ENCODE measurements at regions of chr1 and their contacts with region 1.

Region 1: DNA sequence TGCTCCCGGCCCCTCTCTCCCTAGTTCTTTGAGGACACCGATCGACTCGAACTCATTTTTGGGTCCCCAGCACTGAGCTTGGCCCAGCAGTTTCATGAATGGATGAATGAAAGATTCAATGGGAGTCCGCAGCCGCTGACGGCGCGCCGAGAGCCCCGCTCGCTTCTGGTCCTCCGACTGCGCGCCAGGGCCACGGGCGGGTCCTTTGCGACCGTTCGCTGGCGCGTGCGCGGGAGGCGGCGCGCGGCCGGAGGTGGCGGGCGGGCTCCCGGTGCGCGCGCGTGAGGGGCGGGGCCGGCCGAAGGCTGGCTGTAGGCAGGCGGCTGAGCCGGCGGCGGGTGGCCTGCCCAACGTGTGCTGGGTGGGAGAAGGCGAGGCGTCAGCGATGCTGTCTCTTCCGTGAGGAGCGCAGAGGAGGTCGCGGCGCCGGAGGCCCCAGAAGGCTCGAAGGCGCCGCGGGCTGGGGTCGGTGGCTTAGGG is at the start of gene MAST2:
- DNase-seq: peak; percentile 86
- H3K4me3 Mint-ChIP-seq: peak within 1 kb of the TSS; percentile 93
- H3K27ac Mint-ChIP-seq: peak within 1 kb of the TSS; percentile 72
- H3K4me1 Mint-ChIP-seq: peaks cover 31% of the 10 kb centered on the region
- H3K27me3 Mint-ChIP-seq: no peaks in the 10 kb centered on the region
- CTCF ChIP-seq: no peak
- total RNA-seq, gene MAST2: 33.3 and 39.2 TPM in 2 replicates

Region 2: GRCh38 chr1:45196873-45197272 is 606.5 kb before region 1 on chr1:
- CTCF ChIA-PET with region 1: no interaction called
- POLR2A ChIA-PET with region 1: no interaction called
- intact Hi-C with region 1: no loop called
- DNase-seq: no peak
- H3K4me3 Mint-ChIP-seq: no peak overlapping the region
- H3K27ac Mint-ChIP-seq: no peak overlapping the region
- H3K4me1 Mint-ChIP-seq: no peaks in the 10 kb centered on the region
- H3K27me3 Mint-ChIP-seq: peaks cover 10% of the 10 kb centered on the region
- CTCF ChIP-seq: no peak

Region 3: GRCh38 chr1:45750298-45751038 is 52.9 kb before region 1 on chr1 and contains the start of gene IPP:
- CTCF ChIA-PET with region 1: no interaction called
- POLR2A ChIA-PET with region 1: interaction called, 10 read pairs
- intact Hi-C with region 1: loop called (anchors 1 kb)
- DNase-seq: peak; percentile 97
- H3K4me3 Mint-ChIP-seq: peak within 1 kb of the TSS; percentile 97
- H3K27ac Mint-ChIP-seq: peak within 1 kb of the TSS; percentile 100
- H3K4me1 Mint-ChIP-seq: peaks cover 4% of the 10 kb centered on the region
- H3K27me3 Mint-ChIP-seq: no peaks in the 10 kb centered on the region
- CTCF ChIP-seq: no peak
- total RNA-seq, gene IPP: 11.6 and 17.6 TPM in 2 replicates

Region 4: DNA sequence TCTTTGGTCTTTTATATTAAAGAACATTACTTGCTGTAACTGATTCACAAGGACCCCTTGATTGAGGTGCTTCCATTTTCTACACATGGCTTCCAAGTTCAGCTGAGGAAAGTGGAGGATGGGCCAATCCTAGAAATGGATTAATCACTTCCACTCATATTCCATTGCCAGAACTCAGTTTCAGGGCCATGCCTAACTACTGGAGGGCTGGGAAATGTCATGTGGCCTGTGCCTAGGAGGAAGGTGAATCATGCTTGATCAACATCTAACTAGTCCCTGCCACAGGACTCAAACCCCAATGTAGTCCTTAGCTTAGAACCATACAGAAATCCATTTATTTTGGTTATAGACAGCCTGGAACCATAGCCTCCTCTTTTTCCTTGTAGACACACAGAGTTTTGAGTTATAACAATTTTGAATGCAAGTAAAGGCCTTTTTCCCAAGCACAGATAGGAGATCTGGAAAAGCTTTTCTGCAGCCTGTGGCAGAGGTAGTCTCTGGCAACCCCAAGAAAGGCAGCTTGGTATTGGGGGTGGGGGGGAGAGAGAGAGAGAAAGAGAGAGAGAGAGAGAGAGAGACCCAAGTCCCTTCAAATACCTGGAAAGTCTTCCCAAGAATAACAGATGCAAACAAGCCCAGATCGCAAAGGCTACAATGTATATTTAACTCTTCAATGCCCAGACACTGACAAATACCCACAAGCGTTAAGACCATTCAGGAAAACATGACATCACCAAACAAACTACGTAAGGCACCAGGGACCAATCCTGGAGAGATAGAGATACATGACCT is 12.5 kb after region 1 on chr1:
- CTCF ChIA-PET with region 1: interaction called, 7 read pairs
- POLR2A ChIA-PET with region 1: interaction called, 19 read pairs
- intact Hi-C with region 1: no loop called
- DNase-seq: peak; percentile 43
- H3K4me3 Mint-ChIP-seq: no peak overlapping the region
- H3K27ac Mint-ChIP-seq: peak overlapping the region; percentile 26
- H3K4me1 Mint-ChIP-seq: no peaks in the 10 kb centered on the region
- H3K27me3 Mint-ChIP-seq: no peaks in the 10 kb centered on the region
- CTCF ChIP-seq: no peak

Measured in MCF 10A (cell line).